GM12878 (cell line): ENCODE measurements at regions of chr3 and their contacts with region 1.

Region 1: DNA sequence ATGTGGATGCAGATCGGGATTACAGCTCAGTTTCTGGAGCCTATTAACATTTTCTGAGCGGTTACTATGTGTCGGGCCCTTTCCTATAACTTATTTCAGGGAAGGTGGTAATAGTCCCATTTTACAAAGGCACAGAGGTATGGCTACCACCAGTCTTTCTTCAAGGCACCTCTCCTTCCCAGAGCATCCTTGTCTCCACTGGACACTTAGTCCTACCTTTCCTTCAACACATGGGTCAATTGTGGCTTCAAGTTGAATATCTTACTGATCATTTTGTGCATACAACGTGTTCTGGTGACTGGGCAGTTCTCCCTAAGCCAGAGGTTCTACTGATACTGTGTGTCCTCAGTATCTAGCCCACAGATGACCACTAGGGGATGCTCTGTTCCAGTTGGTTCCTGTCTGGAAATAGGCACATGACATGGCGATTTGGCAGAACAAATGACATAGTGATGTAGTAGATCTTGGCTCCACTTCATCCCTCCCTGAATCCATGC is 60.7 kb upstream of the CMTM8 start:
- DNase-seq: no peak
- ATAC-seq: peak; percentile 95
- H3K4me3 ChIP-seq: no peak overlapping the region
- H3K27ac ChIP-seq: no peak overlapping the region
- H3K4me1 ChIP-seq: no peaks in the 10 kb centered on the region
- H3K27me3 ChIP-seq: no peaks in the 10 kb centered on the region; a peak in 1 of 4 replicates
- CTCF ChIP-seq: peak; percentile 63 to 86 (median 82)
- EP300 ChIP-seq: no peak
- POLR2A ChIP-seq: no peak
- RAD21 ChIP-seq: peak; percentile 48

Region 2: GRCh38 chr3:32048487-32049182 is 129.1 kb before region 1 on chr3:
- CTCF ChIA-PET with region 1: no interaction called
- POLR2A ChIA-PET with region 1: no interaction called
- RAD21 ChIA-PET with region 1: no interaction called
- SMC1A ChIA-PET with region 1: no interaction called
- in situ Hi-C with region 1: no loop called
- intact Hi-C with region 1: no loop called
- DNase-seq: no peak
- ATAC-seq: no peak
- H3K4me3 ChIP-seq: no peak overlapping the region
- H3K27ac ChIP-seq: no peak overlapping the region
- H3K4me1 ChIP-seq: no peaks in the 10 kb centered on the region
- H3K27me3 ChIP-seq: no peaks in the 10 kb centered on the region
- CTCF ChIP-seq: no peak
- EP300 ChIP-seq: no peak
- POLR2A ChIP-seq: no peak
- RAD21 ChIP-seq: no peak

Region 3: GRCh38 chr3:32334675-32335074 is 156.9 kb after region 1 on chr3:
- CTCF ChIA-PET with region 1: interaction called, 4 read pairs
- POLR2A ChIA-PET with region 1: no interaction called
- RAD21 ChIA-PET with region 1: no interaction called
- SMC1A ChIA-PET with region 1: no interaction called
- in situ Hi-C with region 1: loop called (anchors 5 kb)
- intact Hi-C with region 1: loop called (anchors 1 kb)
- DNase-seq: no peak
- ATAC-seq: peak; percentile 80
- H3K4me3 ChIP-seq: no peak overlapping the region
- H3K27ac ChIP-seq: no peak overlapping the region
- H3K4me1 ChIP-seq: no peaks in the 10 kb centered on the region
- H3K27me3 ChIP-seq: no peaks in the 10 kb centered on the region; a peak in 1 of 4 replicates
- CTCF ChIP-seq: peak; percentile 45 to 51 (median 51); a peak in 5 of 6 replicates
- EP300 ChIP-seq: no peak
- POLR2A ChIP-seq: no peak
- RAD21 ChIP-seq: peak; percentile 66

Region 4: GRCh38 chr3:32340039-32340438 is 162.3 kb after region 1 on chr3:
- CTCF ChIA-PET with region 1: no interaction called
- POLR2A ChIA-PET with region 1: no interaction called
- RAD21 ChIA-PET with region 1: no interaction called
- SMC1A ChIA-PET with region 1: no interaction called
- in situ Hi-C with region 1: loop called (anchors 5 kb)
- intact Hi-C with region 1: loop called (anchors 1 kb)
- DNase-seq: no peak
- ATAC-seq: peak; percentile 75
- H3K4me3 ChIP-seq: no peak overlapping the region
- H3K27ac ChIP-seq: no peak overlapping the region
- H3K4me1 ChIP-seq: no peaks in the 10 kb centered on the region
- H3K27me3 ChIP-seq: no peaks in the 10 kb centered on the region; a peak in 1 of 4 replicates
- CTCF ChIP-seq: peak; percentile 33 to 39 (median 38); a peak in 4 of 6 replicates
- EP300 ChIP-seq: no peak
- POLR2A ChIP-seq: no peak
- RAD21 ChIP-seq: peak; percentile 70

Region 5: DNA sequence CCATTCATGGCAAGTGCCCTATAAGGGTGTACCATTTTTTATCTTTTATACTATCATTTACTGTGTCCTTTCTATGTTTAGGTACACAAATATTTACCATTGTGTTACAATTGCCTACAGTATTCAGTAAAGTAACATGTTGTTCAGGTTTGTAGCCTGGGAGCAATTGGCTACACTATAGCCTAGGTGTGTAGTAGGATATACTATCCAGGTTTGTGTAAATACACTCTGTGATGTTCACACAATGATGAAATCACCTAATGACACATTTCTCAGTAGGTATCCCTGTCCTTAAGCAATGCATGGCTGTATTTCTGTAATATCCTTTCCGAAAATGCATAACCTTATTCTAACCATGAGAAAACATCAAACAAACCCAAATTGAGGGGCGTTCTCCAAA is 489.4 kb after region 1 on chr3:
- CTCF ChIA-PET with region 1: interaction called, 3 read pairs
- POLR2A ChIA-PET with region 1: no interaction called
- RAD21 ChIA-PET with region 1: no interaction called
- SMC1A ChIA-PET with region 1: no interaction called
- in situ Hi-C with region 1: loop called (anchors 10 kb)
- intact Hi-C with region 1: loop called (anchors 2 kb)
- DNase-seq: no peak
- ATAC-seq: no peak
- H3K4me3 ChIP-seq: no peak overlapping the region
- H3K27ac ChIP-seq: no peak overlapping the region
- H3K4me1 ChIP-seq: no peaks in the 10 kb centered on the region
- H3K27me3 ChIP-seq: peaks cover 0 to 2% of the 10 kb centered on the region in 2 experiments; a peak in 2 of 4 replicates
- CTCF ChIP-seq: no peak
- EP300 ChIP-seq: no peak
- POLR2A ChIP-seq: no peak
- RAD21 ChIP-seq: no peak